T-cell (primary cell): ENCODE measurements at regions of chr16 and their contacts with region 1.

Region 1: DNA sequence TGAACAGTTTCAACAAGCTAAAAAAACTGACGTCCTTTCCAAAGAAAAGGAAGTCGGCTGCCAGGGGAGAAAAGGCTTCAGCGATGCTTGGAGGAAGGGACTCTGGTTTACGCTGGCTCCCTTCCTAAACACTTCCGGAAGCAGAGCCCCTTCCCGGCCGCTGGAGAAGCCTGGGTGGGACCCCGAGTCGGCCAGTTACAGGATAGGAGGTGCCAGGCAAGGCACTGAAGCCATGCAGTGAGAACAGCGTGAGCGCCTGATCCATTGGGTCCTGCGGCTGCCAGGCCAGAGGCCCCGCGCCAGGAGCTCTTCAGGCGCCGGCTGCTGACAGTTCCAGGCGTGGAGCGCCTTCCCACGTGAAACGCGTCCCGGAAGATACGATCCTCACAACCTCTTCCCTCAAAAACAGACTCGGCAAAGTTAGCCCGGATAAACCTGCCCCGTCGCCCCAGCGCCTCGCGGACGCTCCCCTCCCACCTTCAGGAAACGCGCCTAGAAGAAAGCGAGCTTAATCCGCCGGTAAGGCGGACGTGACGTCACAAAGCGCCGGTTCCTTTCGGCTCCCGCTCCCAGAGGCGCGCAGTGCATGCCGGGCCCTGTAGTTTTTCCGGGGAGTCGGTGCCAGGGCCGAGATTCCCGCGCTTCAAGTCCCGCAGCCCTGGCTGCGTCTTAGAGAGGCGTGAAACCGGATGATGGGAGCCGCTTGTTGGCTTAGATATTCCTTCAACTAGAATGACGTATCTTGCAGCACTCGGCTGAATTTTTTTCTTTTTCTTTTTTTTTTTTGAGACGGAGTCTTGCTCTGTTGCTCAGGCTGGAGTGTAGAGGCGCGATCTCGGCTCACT is at the start of gene ADAT1:
- DNase-seq: peak; percentile 89 to 100 (median 99)
- ATAC-seq: peak; percentile 91 to 95 (median 93)
- H3K4me3 ChIP-seq: peak within 1 kb of the TSS; percentile 91 to 93
- H3K4me3 Mint-ChIP-seq: peak within 1 kb of the TSS; percentile 94 to 96 (median 95)
- H3K27ac ChIP-seq: peak within 1 kb of the TSS; percentile 96
- H3K27ac Mint-ChIP-seq: peak within 1 kb of the TSS; percentile 90 to 96
- H3K4me1 ChIP-seq: peaks cover 19 to 59% of the 10 kb centered on the region in 2 experiments
- H3K4me1 Mint-ChIP-seq: peaks cover 55 to 75% (median 63%) of the 10 kb centered on the region in 3 donors
- H3K27me3 ChIP-seq: no peaks in the 10 kb centered on the region
- H3K27me3 Mint-ChIP-seq: no peaks in the 10 kb centered on the region
- total RNA-seq, gene ADAT1: 62.9 to 79.2 (median 72.0) TPM

Region 2: DNA sequence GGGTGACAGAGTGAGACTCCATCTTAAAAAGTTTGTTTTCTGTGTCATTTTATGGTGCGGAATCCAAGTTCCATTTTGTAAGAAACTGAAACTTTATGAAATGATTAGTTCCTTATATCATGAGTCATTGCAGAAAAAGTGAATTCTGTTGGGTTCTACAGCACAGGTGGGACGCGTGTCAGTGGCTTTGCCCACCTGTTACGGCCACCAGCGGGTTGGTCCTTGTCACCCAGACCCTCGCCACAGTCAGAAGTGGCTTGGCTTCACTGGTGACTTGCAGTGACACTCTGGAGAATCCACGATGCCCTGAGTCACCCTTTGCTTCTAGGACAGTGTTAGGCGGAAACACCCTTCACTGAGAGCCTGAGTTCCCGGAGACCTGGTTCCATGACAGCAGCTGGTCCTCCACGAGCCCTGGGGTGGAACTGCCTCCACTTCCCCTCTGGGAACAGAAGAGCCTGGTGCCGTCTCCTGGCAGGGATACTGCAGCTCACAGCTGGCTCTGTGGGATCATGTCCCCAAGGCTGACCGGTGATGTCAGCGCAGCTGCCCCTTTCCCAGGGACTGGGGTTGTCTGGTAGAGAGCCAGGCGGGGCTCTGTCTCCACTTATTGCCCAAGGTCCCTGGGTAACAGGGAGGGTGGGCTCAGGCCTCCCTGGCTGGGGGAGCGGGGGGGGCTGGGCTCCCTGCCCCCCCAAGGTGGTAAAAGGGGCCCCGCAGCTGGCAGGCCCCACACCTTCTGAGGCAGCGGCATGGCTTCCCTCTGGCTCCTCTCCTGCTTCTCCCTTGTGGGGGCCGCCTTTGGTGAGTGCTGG is 404.5 kb before region 1 on chr16 and contains the start of gene CTRB1:
- CTCF ChIA-PET with region 1: no interaction called
- POLR2A ChIA-PET with region 1: interaction called in 1 of 2 experiments, 10 read pairs
- DNase-seq: no peak
- ATAC-seq: no peak
- H3K4me3 ChIP-seq: peak within 1 kb of the TSS; percentile 20 to 51
- H3K4me3 Mint-ChIP-seq: peak within 1 kb of the TSS; percentile 73 to 82 (median 76)
- H3K27ac ChIP-seq: peak within 1 kb of the TSS; percentile 47
- H3K27ac Mint-ChIP-seq: peak within 1 kb of the TSS; percentile 83 to 95
- H3K4me1 ChIP-seq: peaks cover 0 to 10% of the 10 kb centered on the region in 2 experiments
- H3K4me1 Mint-ChIP-seq: peaks cover 8 to 17% (median 12%) of the 10 kb centered on the region in 3 donors
- H3K27me3 ChIP-seq: no peaks in the 10 kb centered on the region
- H3K27me3 Mint-ChIP-seq: no peaks in the 10 kb centered on the region
- total RNA-seq, gene CTRB1: 6.1 to 8.3 (median 7.9) TPM in 3 of 5 donors, not detected in the others

Region 3: GRCh38 chr16:75566040-75566810 is 56.8 kb before region 1 on chr16 and contains the start of gene GABARAPL2:
- CTCF ChIA-PET with region 1: interaction called in 1 of 2 experiments, 19 read pairs
- POLR2A ChIA-PET with region 1: interaction called, 3 to 14 read pairs
- DNase-seq: peak; percentile 67 to 95 (median 87)
- ATAC-seq: peak; percentile 79 to 88 (median 86)
- H3K4me3 ChIP-seq: peak within 1 kb of the TSS; percentile 68 to 94
- H3K4me3 Mint-ChIP-seq: peak within 1 kb of the TSS; percentile 89 to 100 (median 99)
- H3K27ac ChIP-seq: peak within 1 kb of the TSS; percentile 83
- H3K27ac Mint-ChIP-seq: peak within 1 kb of the TSS; percentile 89 to 95
- H3K4me1 ChIP-seq: peaks cover 6 to 37% of the 10 kb centered on the region in 2 experiments
- H3K4me1 Mint-ChIP-seq: peaks cover 38 to 50% (median 48%) of the 10 kb centered on the region in 3 donors
- H3K27me3 ChIP-seq: peaks cover 0 to 4% of the 10 kb centered on the region in 2 experiments
- H3K27me3 Mint-ChIP-seq: peaks cover 9 to 10% of the 10 kb centered on the region in 2 donors
- total RNA-seq, gene GABARAPL2: 70.9 to 78.6 (median 76.4) TPM

Region 4: DNA sequence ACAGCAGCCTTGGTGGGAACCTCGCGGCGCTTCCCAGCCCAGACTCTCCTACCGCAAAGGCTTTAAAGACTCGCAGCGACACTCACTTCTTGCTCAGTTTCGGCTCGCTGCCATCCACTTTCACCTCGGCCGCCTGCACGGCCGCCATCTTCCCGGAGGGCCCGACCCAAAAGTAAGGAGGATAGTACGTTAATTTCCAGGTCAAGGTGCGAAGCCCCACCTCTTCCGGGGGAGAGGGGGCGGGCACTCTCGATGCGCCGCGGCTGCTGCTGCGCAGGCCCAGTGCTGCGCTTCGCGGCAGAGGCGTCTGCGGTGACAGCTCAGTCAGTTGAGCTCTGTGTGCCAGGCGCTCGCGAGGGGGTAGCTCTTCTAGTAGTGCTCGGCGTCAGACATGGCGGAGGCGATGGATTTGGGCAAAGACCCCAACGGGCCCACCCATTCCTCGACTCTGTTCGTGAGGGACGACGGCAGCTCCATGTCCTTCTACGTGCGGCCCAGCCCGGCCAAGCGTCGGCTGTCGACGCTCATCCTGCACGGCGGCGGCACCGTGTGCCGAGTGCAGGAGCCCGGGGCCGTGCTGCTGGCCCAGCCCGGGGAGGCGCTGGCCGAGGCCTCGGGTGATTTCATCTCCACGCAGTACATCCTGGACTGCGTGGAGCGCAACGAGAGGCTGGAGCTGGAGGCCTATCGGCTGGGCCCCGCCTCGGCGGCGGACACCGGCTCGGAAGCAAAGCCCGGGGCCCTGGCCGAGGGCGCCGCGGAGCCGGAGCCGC is 24.7 kb after region 1 on chr16 and contains the starts of genes KARS1 and TERF2IP:
- CTCF ChIA-PET with region 1: interaction called, 6 to 27 read pairs
- POLR2A ChIA-PET with region 1: interaction called, 9 to 59 read pairs
- DNase-seq: peak; percentile 83 to 98 (median 94)
- ATAC-seq: peak; percentile 86 to 88 (median 87)
- H3K4me3 ChIP-seq: peak within 1 kb of the TSS; percentile 89 to 100
- H3K4me3 Mint-ChIP-seq: peak within 1 kb of the TSS; percentile 99 to 100 (median 99)
- H3K27ac ChIP-seq: peak within 1 kb of the TSS; percentile 94
- H3K27ac Mint-ChIP-seq: peak within 1 kb of the TSS; percentile 99
- H3K4me1 ChIP-seq: peaks cover 37 to 54% of the 10 kb centered on the region in 2 experiments
- H3K4me1 Mint-ChIP-seq: peaks cover 66 to 74% (median 69%) of the 10 kb centered on the region in 3 donors
- H3K27me3 ChIP-seq: no peaks in the 10 kb centered on the region
- H3K27me3 Mint-ChIP-seq: no peaks in the 10 kb centered on the region
- total RNA-seq, gene KARS1: 121 to 151 (median 128) TPM
- total RNA-seq, gene TERF2IP: 86.0 to 104 (median 94.0) TPM

Region 5: GRCh38 chr16:75660726-75661302 is 37.8 kb after region 1 on chr16:
- CTCF ChIA-PET with region 1: no interaction called
- POLR2A ChIA-PET with region 1: interaction called in 1 of 2 experiments, 10 read pairs
- DNase-seq: no peak
- ATAC-seq: no peak
- H3K4me3 ChIP-seq: no peak overlapping the region
- H3K4me3 Mint-ChIP-seq: no peak overlapping the region
- H3K27ac ChIP-seq: no peak overlapping the region
- H3K27ac Mint-ChIP-seq: no peak overlapping the region
- H3K4me1 ChIP-seq: no peaks in the 10 kb centered on the region
- H3K4me1 Mint-ChIP-seq: peaks cover 14 to 16% (median 15%) of the 10 kb centered on the region in 3 donors
- H3K27me3 ChIP-seq: no peaks in the 10 kb centered on the region
- H3K27me3 Mint-ChIP-seq: no peaks in the 10 kb centered on the region